Posterior vena cava (tissue), 2 donors: ENCODE measurements at regions of chr5 and their contacts with region 1.

Region 1: DNA sequence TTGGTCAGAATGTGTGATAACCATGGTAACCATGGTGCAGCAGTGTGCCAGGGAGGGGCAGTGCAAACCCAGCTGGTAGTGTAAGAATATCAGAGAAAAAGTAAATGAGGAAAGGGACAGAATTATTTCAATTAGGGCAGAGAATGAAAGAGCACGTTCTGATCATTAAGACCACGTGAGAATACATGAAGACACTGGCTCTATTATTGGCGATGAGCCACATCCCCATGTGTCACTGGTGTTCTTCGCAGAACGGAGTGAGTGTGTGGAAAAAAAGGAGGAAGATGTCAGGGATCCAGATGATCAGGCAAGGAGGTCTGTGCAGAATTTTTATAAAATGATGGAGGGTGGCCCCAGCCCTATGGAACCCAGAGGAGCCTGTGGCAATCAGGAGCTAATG is 315.5 kb downstream of the SEMA5A start:
- DNase-seq: no peak

Region 2: GRCh38 chr5:7941692-7942091 is 1288.7 kb before region 1 on chr5:
- intact Hi-C with region 1: loop called in 1 of 2 experiments (anchors 2 kb)
- DNase-seq: no peak

Region 3: DNA sequence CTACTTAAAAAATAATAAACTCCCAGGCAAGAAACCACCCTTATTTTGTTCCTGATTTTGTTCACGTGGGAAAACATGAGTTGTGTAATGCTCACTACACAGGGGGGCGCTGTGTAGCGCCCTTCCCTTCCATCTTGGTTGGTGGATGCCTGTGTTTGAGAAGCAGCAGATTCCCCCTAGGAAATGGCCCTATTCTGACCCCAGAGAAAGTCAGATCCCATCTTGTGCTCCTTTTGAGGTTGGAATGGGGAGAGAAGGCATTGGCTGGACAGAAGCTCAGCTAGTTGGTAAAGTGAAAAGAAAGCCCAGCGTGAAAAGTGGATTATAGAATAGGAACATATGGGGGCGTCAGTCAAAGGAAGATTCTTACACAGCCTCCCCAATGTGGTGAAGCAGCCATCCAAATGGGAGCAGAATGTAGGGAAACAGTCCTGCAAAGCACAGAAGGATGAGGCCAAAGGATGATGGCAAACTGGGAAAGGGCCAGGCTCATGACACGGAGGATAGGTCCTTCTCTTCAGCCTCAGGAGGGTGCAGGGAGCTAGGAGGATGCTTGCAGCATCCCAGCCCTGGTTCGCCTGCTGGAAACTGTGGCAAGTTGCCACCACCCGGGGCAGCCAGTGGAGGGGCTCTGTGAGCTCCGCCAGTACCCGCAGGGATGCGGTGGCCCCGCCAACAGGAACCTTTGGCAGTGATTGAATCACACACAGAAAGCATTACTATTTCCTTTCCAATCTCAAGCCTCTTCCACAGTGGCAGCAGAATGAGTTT is 1844.9 kb after region 1 on chr5:
- intact Hi-C with region 1: no loop called
- DNase-seq: no peak